K562 (cell line): ENCODE measurements at regions of chr7 and their contacts with region 1.

Region 1: DNA sequence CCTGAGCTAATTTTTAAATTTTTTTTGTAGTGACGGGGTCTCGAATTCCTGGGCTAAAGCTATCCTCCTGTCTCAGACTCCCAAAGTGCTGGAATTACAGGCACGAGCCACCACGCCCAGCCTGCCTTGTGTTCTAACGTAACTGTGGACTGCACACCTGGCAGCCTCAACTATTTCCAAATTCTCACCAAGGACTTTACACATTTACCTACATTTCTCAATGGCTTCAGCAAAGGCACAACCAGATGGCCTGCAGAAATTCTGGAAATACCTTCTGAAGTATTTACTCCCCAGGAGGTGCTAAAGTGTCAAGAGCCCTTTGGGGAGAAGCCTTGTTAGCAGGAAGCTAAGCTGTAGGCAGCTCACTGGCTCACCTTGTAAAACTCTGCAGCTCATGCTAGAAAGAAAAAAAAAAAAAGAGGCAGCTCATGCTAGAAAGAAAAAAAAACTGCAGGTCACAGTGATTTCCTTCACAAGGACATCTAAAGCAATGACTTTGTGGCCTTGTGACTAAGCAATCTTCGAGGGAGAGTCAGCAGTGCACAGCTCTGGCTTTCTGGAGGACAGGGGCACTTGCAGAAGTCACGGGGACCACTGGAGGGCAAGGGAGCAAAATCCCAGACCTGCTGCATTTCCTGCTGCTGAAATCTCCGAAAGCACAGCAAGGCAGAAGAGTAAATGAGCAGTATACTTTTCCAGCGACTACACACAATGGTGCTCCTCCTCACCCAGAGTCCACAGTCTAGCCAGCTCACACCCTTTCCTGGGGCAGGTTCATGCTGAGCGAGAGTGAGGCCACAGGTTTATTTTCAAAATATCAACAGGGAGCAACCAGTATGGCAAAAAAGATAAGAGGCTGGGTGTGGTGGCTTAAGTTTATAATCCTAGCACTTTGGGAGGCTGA is 40.4 kb downstream of the BAIAP2L1 start:
- DNase-seq: peak; percentile 63 to 83 (median 74)
- ATAC-seq: peak; percentile 97
- H3K4me3 ChIP-seq: no peak overlapping the region
- H3K27ac ChIP-seq: peak overlapping the region; percentile 57; the same call in 2 of the 3 replicates
- H3K4me1 ChIP-seq: peaks cover 11 to 21% of the 10 kb centered on the region in 2 experiments
- H3K27me3 ChIP-seq: no peaks in the 10 kb centered on the region; a peak in 1 of 5 replicates
- CTCF ChIP-seq: peak in 2 of 3 experiments; percentile 10 to 41; a peak in 3 of 6 replicates
- EP300 ChIP-seq: peak; percentile 45; the same call in 1 of the 2 replicates
- POLR2A ChIP-seq: no peak
- RAD21 ChIP-seq: no peak

Region 2: GRCh38 chr7:98400542-98401340 is 40.3 kb after region 1 on chr7 and contains the start of gene BAIAP2L1:
- CTCF ChIA-PET with region 1: no interaction called
- POLR2A ChIA-PET with region 1: interaction called, 3 read pairs
- in situ Hi-C with region 1: no loop called
- intact Hi-C with region 1: loop called (anchors 2 kb)
- DNase-seq: peak; percentile 95 to 100 (median 100)
- ATAC-seq: peak; percentile 96
- H3K4me3 ChIP-seq: peak within 1 kb of the TSS; percentile 66
- H3K27ac ChIP-seq: peak within 1 kb of the TSS; percentile 88
- H3K4me1 ChIP-seq: peaks cover 8 to 13% of the 10 kb centered on the region in 2 experiments; a peak in 4 of 5 replicates
- H3K27me3 ChIP-seq: peaks cover 17 to 34% of the 10 kb centered on the region in 2 experiments
- CTCF ChIP-seq: peak in 1 of 3 experiments; percentile 84; a peak in 3 of 6 replicates
- EP300 ChIP-seq: no peak
- POLR2A ChIP-seq: peak; percentile 60; the same call in 1 of the 2 replicates
- RAD21 ChIP-seq: no peak; a peak in 2 of 4 replicates
- polyA plus RNA-seq, gene BAIAP2L1: 4.2 to 4.3 TPM

Region 3: DNA sequence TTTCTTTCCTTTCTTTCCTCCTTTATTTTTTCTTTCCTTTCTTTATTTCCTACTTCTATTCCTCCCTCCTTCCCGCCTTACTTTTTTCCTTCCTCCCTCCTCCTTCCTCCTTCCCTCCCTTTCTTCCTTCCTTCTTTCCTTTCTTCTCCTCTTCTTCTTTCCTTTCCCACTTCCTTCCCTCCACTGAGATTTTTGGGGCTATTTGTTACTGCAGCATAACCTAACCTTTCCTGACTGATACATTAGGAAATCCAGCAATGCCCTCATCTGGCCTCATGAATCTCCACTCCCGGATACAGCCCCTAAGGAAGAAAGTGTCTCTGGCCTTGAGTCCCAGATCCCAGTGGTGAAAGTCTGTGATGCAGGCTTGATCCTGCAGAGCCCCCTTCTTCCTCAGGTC is 79.0 kb after region 1 on chr7:
- CTCF ChIA-PET with region 1: no interaction called
- POLR2A ChIA-PET with region 1: no interaction called
- in situ Hi-C with region 1: no loop called
- intact Hi-C with region 1: no loop called
- DNase-seq: no peak
- ATAC-seq: no peak
- H3K4me3 ChIP-seq: no peak overlapping the region
- H3K27ac ChIP-seq: no peak overlapping the region
- H3K4me1 ChIP-seq: no peaks in the 10 kb centered on the region
- H3K27me3 ChIP-seq: peaks cover 8 to 29% of the 10 kb centered on the region in 2 experiments; a peak in 4 of 5 replicates
- CTCF ChIP-seq: no peak
- EP300 ChIP-seq: no peak
- POLR2A ChIP-seq: no peak
- RAD21 ChIP-seq: no peak